AG04449 (cell line): ENCODE measurements at regions of chr9 and their contacts with region 1.

Region 1: GRCh38 chr9:121157939-121158338 is 43.7 kb downstream of the RAB14 start:
- DNase-seq: no peak
- H3K4me3 ChIP-seq: no peak overlapping the region
- CTCF ChIP-seq: no peak

Region 2: GRCh38 chr9:121169094-121169601 is 11.2 kb after region 1 on chr9:
- CTCF ChIA-PET with region 1: interaction called, 11 read pairs
- POLR2A ChIA-PET with region 1: no interaction called
- DNase-seq: no peak
- H3K4me3 ChIP-seq: no peak overlapping the region
- CTCF ChIP-seq: peak; percentile 41